ENCODE measurements at regions of chr14 and their contacts with region 1.

Region 1: DNA sequence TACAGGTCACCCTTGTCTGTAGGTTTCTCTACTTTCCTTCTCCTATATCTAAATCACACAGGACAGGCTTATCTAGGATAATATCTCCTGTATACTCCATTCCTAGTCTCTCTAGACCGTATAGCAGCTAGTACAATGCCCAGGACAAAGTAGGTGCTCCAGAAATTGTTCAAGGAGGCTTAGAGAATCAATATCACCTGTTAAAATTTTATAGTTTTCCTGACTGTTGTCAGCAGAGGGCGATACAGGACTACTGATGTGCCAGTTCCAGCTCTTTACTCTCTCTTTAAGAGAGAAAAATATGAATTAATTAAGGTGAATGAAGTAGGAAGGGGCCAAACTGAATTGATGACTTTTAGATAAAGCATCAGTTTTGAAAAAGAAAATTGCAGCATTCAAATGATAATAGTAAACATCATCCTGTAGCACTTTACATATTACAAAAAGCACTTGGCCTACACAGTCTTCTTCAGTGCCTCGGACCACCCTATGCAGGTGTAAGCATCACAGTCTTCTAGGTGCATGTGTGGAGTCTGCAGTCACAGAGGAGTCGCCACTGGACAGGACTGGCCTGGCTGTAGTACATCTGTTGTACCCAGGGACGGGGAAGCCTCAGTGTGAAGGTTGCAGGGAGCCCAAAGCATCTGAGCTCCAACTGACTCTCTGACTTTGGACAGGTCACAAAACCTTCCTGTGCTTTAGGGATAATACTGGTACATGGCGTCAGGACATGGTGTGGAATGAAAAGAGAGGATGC is 61.9 kb upstream of the MAX start:
- DNase-seq: peak; percentile 78
- ATAC-seq: peak; percentile 45
- H3K4me3 ChIP-seq: no peak overlapping the region
- H3K4me3 Mint-ChIP-seq: no peak overlapping the region
- H3K27ac ChIP-seq: no peak overlapping the region
- H3K27ac Mint-ChIP-seq: no peak overlapping the region
- H3K4me1 ChIP-seq: peaks cover 17 to 32% of the 10 kb centered on the region in 2 donors
- H3K4me1 Mint-ChIP-seq: peaks cover 54% of the 10 kb centered on the region
- H3K27me3 ChIP-seq: no peaks in the 10 kb centered on the region
- H3K27me3 Mint-ChIP-seq: no peaks in the 10 kb centered on the region
- CTCF ChIP-seq: peak; percentile 91

Region 2: GRCh38 chr14:65179918-65180724 is 15.9 kb after region 1 on chr14:
- CTCF ChIA-PET with region 1: interaction called, 14 read pairs
- POLR2A ChIA-PET with region 1: no interaction called
- intact Hi-C with region 1: no loop called
- DNase-seq: peak; percentile 79
- ATAC-seq: peak; percentile 93
- H3K4me3 ChIP-seq: peak overlapping the region in 1 of 5 experiments; percentile 15
- H3K4me3 Mint-ChIP-seq: peak overlapping the region; percentile 55
- H3K27ac ChIP-seq: peak overlapping the region in 1 of 2 donors; percentile 72
- H3K27ac Mint-ChIP-seq: peak overlapping the region; percentile 76
- H3K4me1 ChIP-seq: peaks cover 14 to 15% of the 10 kb centered on the region in 2 donors
- H3K4me1 Mint-ChIP-seq: peaks cover 29% of the 10 kb centered on the region
- H3K27me3 ChIP-seq: no peaks in the 10 kb centered on the region
- H3K27me3 Mint-ChIP-seq: no peaks in the 10 kb centered on the region
- CTCF ChIP-seq: no peak

Region 3: DNA sequence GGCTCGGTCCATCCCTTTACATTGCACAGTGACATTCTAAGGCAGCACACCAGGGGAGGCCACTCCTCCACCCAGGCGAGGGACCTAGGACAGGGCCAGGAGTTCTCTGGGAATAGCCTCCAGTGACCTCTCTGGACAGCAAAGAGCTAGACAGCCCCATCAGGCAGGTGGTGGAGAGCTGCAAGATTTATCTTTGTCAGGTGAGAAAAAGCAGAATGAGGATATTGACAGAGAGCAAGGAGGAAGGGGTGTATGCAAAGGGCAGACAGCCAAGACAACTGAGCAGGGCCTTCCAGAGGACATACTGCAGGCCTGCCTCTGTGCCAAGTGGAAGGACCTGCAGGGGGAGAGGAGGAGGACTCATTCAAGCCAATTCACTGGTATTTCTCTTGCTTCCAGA is 50.5 kb after region 1 on chr14:
- CTCF ChIA-PET with region 1: interaction called, 26 read pairs
- POLR2A ChIA-PET with region 1: interaction called, 3 read pairs
- intact Hi-C with region 1: no loop called
- DNase-seq: no peak
- ATAC-seq: no peak
- H3K4me3 ChIP-seq: no peak overlapping the region
- H3K4me3 Mint-ChIP-seq: no peak overlapping the region
- H3K27ac ChIP-seq: no peak overlapping the region
- H3K27ac Mint-ChIP-seq: peak overlapping the region; percentile 5
- H3K4me1 ChIP-seq: peaks cover 26 to 27% of the 10 kb centered on the region in 2 donors
- H3K4me1 Mint-ChIP-seq: peaks cover 37% of the 10 kb centered on the region
- H3K27me3 ChIP-seq: no peaks in the 10 kb centered on the region
- H3K27me3 Mint-ChIP-seq: no peaks in the 10 kb centered on the region
- CTCF ChIP-seq: no peak

Region 4: GRCh38 chr14:65229751-65230749 is 65.8 kb after region 1 on chr14:
- CTCF ChIA-PET with region 1: interaction called, 15 read pairs
- POLR2A ChIA-PET with region 1: interaction called, 12 read pairs
- intact Hi-C with region 1: loop called (anchors 2 kb)
- DNase-seq: peak; percentile 59
- ATAC-seq: peak; percentile 50
- H3K4me3 ChIP-seq: peak overlapping the region; percentile 36 to 60 (median 58)
- H3K4me3 Mint-ChIP-seq: peak overlapping the region; percentile 90
- H3K27ac ChIP-seq: peak overlapping the region; percentile 74 to 83
- H3K27ac Mint-ChIP-seq: peak overlapping the region; percentile 95
- H3K4me1 ChIP-seq: peaks cover 63 to 71% of the 10 kb centered on the region in 2 donors
- H3K4me1 Mint-ChIP-seq: peaks cover 58% of the 10 kb centered on the region
- H3K27me3 ChIP-seq: no peaks in the 10 kb centered on the region
- H3K27me3 Mint-ChIP-seq: no peaks in the 10 kb centered on the region
- CTCF ChIP-seq: no peak

Region 5: GRCh38 chr14:65287264-65288131 is 123.3 kb after region 1 on chr14:
- CTCF ChIA-PET with region 1: interaction called, 32 read pairs
- POLR2A ChIA-PET with region 1: interaction called, 4 read pairs
- intact Hi-C with region 1: loop called (anchors 5 kb)
- DNase-seq: peak; percentile 75
- ATAC-seq: peak; percentile 59
- H3K4me3 ChIP-seq: peak overlapping the region in 3 of 5 experiments; percentile 3 to 38 (median 16)
- H3K4me3 Mint-ChIP-seq: peak overlapping the region; percentile 70
- H3K27ac ChIP-seq: peak overlapping the region; percentile 89 to 95
- H3K27ac Mint-ChIP-seq: peak overlapping the region; percentile 95
- H3K4me1 ChIP-seq: peaks cover 75 to 87% of the 10 kb centered on the region in 2 donors
- H3K4me1 Mint-ChIP-seq: peaks cover 81% of the 10 kb centered on the region
- H3K27me3 ChIP-seq: no peaks in the 10 kb centered on the region
- H3K27me3 Mint-ChIP-seq: no peaks in the 10 kb centered on the region
- CTCF ChIP-seq: no peak

Region 6: DNA sequence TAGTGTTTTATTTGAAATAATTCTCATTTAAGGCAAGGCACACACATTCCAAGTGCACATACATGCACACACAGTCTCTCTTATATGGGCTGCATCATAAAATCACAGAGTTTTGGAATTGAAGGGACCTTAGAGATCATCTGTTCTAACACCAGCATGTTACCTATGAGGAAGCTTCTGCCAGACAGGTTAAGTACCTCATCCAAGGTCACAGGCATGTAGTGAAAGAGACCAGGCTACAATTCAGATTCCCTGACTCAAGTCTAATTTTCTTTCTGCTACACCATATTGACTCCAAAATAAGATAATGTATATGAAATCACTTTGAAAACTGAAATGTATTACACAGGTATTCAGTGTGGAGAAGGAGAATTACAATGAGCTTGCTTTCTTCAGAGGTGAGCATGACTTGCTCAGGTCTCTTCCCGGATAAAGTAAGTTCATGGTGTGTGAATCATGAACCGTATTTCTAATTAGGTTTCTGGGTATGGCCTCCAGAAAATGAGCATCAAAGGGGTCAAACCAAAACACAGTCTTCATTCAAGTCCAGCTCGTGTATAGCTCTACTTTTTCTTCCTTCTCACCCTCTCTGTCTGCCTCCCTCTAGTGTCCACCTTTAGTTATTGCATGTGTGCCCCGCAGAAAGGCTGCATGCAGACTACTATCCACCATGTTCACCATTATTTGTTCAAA is 660.2 kb after region 1 on chr14:
- CTCF ChIA-PET with region 1: interaction called, 226 read pairs
- POLR2A ChIA-PET with region 1: interaction called, 6 read pairs
- intact Hi-C with region 1: loop called (anchors 1 kb)
- DNase-seq: peak; percentile 80
- ATAC-seq: peak; percentile 98
- H3K4me3 ChIP-seq: no peak overlapping the region
- H3K4me3 Mint-ChIP-seq: no peak overlapping the region
- H3K27ac ChIP-seq: no peak overlapping the region
- H3K27ac Mint-ChIP-seq: no peak overlapping the region
- H3K4me1 ChIP-seq: peaks cover 0 to 2% of the 10 kb centered on the region in 2 donors
- H3K4me1 Mint-ChIP-seq: peaks cover 3% of the 10 kb centered on the region
- H3K27me3 ChIP-seq: no peaks in the 10 kb centered on the region
- H3K27me3 Mint-ChIP-seq: peaks cover 3% of the 10 kb centered on the region
- CTCF ChIP-seq: peak; percentile 98

Region 7: GRCh38 chr14:66070509-66071319 is 906.5 kb after region 1 on chr14:
- CTCF ChIA-PET with region 1: interaction called, 23 read pairs
- POLR2A ChIA-PET with region 1: no interaction called
- intact Hi-C with region 1: no loop called
- DNase-seq: peak; percentile 64
- ATAC-seq: peak; percentile 71
- H3K4me3 ChIP-seq: no peak overlapping the region
- H3K4me3 Mint-ChIP-seq: no peak overlapping the region
- H3K27ac ChIP-seq: no peak overlapping the region
- H3K27ac Mint-ChIP-seq: no peak overlapping the region
- H3K4me1 ChIP-seq: no peaks in the 10 kb centered on the region
- H3K4me1 Mint-ChIP-seq: no peaks in the 10 kb centered on the region
- H3K27me3 ChIP-seq: peaks cover 0 to 4% (median 0%) of the 10 kb centered on the region in 4 experiments
- H3K27me3 Mint-ChIP-seq: peaks cover 16% of the 10 kb centered on the region
- CTCF ChIP-seq: peak; percentile 94